Activated CD4-positive, alpha-beta T cell treated with anti-CD3 and anti-CD28 coated beads, Interleukin-2, amount 10 ng/mL, durations not matched to agents 7 days and 5 days (primary cell): ENCODE measurements at regions of chr15 and their contacts with region 1.

Region 1: DNA sequence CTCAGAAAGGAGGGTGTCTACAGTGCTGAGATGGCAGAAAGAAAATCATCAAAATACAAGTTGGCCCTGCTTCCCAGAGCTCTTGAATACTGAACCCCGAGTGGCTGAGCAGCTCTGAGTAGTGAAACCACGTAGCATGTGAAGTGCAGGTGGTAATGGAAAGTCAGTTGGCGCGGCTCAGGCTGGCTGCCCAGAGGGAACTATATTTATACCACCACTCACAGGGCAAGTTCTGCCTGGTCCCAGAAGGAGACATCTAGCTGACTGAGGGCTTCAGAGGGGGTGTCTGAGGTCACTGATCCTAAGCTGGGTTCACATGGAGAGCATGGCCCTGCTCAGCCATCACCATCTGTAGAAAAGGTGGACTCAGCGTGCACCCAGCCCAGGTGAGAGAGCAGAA is 129.6 kb upstream of the AGBL1 start:
- DNase-seq: no peak
- H3K4me3 Mint-ChIP-seq: no peak overlapping the region
- H3K27ac Mint-ChIP-seq: no peak overlapping the region
- H3K4me1 Mint-ChIP-seq: no peaks in the 10 kb centered on the region
- H3K27me3 Mint-ChIP-seq: peaks cover 6% of the 10 kb centered on the region

Region 2: DNA sequence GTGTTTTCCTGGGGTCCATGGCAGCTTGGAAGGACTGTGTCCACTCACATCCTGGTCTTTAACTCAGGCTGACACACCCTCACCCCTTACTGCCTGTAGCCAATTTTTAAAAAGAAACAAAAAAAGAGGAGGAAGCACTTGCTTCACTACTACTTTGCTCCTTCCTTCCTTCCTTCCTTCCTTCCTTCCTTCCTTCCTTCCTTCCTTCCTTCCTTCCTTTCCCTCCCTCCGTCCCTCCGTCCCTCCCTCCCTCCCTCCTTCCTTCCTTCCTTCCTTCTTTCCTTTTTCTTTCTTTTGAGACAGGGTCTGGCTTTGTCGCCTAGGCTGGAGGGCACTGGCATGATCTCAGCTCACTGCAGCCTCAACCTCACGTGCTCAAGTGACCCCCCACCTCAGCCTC is 595.2 kb before region 1 on chr15:
- CTCF ChIA-PET with region 1: no interaction called
- POLR2A ChIA-PET with region 1: interaction called, 10 read pairs
- DNase-seq: no peak
- H3K4me3 Mint-ChIP-seq: no peak overlapping the region
- H3K27ac Mint-ChIP-seq: no peak overlapping the region
- H3K4me1 Mint-ChIP-seq: peaks cover 14% of the 10 kb centered on the region
- H3K27me3 Mint-ChIP-seq: peaks cover 5% of the 10 kb centered on the region